Activated CD4-positive, alpha-beta memory T cell treated with anti-CD3 and anti-CD28 coated beads for 36 hours (primary cell): ENCODE measurements at regions of chr15 and their contacts with region 1.

Region 1: DNA sequence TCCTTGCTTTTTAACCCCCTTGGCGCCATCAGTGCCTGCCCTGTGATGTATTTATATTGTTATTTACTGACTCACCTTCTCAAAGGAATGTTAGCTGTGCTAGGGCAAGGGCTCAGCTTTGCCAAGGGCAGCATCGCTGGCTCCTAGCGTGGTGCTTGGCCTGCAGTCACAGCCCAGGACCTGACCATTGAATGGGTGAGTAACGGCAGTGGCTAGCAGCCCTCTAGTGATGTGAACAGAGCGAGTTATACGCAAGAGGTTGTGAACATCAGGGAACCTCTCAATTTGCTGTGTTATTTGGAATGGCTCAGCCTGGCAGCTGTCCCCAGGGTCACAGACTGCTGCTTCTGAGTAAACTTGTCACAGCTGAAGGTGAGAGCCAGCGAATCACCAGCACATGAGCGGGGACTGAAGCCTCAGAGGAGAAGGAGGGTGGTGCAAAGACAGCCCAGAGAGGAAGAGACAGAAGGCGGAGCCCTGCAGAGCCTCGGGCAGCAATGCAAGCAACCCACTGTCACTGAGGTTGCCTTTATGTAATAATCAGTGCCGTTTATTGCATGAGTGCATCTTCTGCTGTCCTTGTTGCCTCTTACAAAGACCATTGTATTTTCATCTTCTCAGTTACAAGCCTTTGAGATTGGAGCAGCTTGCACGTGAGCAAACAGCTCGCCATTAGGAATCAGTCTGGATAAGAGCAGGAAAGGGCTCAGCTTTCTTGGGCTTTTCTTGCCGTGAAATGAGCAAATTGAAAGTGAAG is 158.3 kb downstream of the SLCO3A1 start:
- DNase-seq: peak; percentile 67
- H3K4me3 Mint-ChIP-seq: peak overlapping the region; percentile 39
- H3K27ac Mint-ChIP-seq: peak overlapping the region; percentile 66
- H3K4me1 Mint-ChIP-seq: peaks cover 71% of the 10 kb centered on the region
- H3K27me3 Mint-ChIP-seq: no peaks in the 10 kb centered on the region

Region 2: DNA sequence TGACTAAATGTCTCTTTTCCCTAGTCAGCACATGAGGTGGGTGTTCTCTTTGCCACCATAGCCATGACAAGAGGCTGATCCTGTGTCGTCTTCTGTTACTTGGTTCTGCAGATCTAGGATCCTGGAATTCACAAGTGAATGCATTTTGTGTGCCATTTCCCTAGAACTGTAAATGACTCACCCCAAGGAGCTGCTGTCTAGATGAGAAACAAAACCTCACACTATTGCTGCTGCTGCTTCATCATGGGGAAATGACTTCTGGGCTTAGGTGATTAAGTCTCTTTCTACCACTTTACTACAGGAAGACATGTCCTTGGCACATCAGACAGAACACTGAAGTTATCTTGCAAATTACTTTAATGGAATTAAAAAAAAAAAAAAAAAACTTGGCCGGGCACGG is 103.4 kb before region 1 on chr15:
- CTCF ChIA-PET with region 1: no interaction called
- POLR2A ChIA-PET with region 1: no interaction called
- intact Hi-C with region 1: loop called (anchors 1 kb)
- DNase-seq: peak; percentile 16
- H3K4me3 Mint-ChIP-seq: no peak overlapping the region
- H3K27ac Mint-ChIP-seq: peak overlapping the region; percentile 59
- H3K4me1 Mint-ChIP-seq: peaks cover 58% of the 10 kb centered on the region
- H3K27me3 Mint-ChIP-seq: no peaks in the 10 kb centered on the region

Region 3: DNA sequence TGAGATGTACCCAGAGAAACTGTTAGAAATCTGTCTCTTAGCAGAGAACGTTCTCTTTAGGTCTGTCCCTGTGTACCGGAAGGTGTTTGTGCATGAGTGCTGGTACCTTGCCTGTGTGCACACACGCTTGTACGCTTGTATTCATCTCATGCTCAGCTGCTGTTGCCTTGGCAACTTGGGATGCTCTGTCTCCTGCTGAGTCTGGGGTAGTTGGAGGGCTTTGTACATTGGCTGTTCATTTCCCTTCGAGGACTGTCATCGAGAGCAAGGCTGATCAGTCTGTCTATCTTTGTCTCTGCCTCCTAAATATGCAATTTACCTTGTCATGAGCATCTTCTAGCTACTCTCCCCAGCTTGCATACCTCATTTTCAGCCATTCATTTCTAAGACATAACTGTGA is 11.1 kb before region 1 on chr15:
- CTCF ChIA-PET with region 1: no interaction called
- POLR2A ChIA-PET with region 1: no interaction called
- intact Hi-C with region 1: no loop called
- DNase-seq: no peak
- H3K4me3 Mint-ChIP-seq: no peak overlapping the region
- H3K27ac Mint-ChIP-seq: no peak overlapping the region
- H3K4me1 Mint-ChIP-seq: peaks cover 26% of the 10 kb centered on the region
- H3K27me3 Mint-ChIP-seq: no peaks in the 10 kb centered on the region

Region 4: DNA sequence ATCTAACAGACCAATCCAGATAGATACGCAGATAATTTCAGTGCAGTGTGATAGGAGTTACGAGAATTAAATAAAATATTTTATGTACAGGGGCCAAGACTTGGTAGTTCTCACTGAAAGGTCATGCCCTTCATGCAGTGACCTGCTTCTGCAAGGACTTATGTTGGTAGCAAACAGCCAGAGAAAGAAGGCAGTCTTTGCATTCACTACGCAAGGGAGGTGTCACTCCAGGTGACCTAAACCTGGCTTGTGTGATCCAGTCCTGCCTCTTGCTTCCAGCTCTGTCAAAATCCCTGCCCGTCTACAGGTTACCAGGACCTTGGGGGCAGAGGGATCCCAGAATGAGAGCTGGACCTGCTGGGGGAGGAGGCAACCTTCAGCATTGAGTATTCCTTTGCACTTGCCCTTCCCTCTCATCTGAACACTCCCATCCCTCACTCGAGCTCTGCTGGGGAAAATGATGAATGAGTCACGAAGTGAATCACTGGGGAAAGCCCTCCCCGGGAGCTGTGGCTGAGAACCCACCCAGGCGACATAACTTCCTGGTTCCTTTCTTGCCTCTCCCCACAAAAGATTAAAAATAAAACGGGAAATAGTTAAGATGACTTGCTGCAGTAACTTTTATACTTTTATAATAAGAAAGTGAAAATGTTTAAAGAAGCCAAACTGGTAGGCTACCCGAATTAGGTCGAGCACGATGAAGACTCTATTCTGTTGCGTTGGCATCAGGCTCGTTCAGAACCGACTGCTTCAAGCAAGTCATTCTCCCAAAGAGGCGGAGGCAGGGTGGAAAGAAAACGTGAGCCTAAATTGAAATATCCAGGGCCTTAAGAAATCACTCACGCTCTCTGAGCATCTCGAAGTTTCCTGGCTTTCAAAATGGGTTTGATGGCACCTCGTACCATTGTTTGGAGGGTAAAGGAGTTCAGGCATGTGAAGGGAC is 57.8 kb after region 1 on chr15:
- CTCF ChIA-PET with region 1: interaction called, 3 read pairs
- POLR2A ChIA-PET with region 1: no interaction called
- intact Hi-C with region 1: loop called (anchors 1 kb)
- DNase-seq: peak; percentile 75
- H3K4me3 Mint-ChIP-seq: peak overlapping the region; percentile 35
- H3K27ac Mint-ChIP-seq: peak overlapping the region; percentile 10
- H3K4me1 Mint-ChIP-seq: peaks cover 52% of the 10 kb centered on the region
- H3K27me3 Mint-ChIP-seq: no peaks in the 10 kb centered on the region

Region 5: GRCh38 chr15:92130906-92131305 is 119.1 kb after region 1 on chr15:
- CTCF ChIA-PET with region 1: no interaction called
- POLR2A ChIA-PET with region 1: no interaction called
- intact Hi-C with region 1: no loop called
- DNase-seq: no peak
- H3K4me3 Mint-ChIP-seq: no peak overlapping the region
- H3K27ac Mint-ChIP-seq: no peak overlapping the region
- H3K4me1 Mint-ChIP-seq: peaks cover 11% of the 10 kb centered on the region
- H3K27me3 Mint-ChIP-seq: no peaks in the 10 kb centered on the region